GM10248 (cell line): ENCODE measurements at regions of chr12 and their contacts with region 1.

Region 1: GRCh38 chr12:51980051-51980808 is 26.5 kb upstream of the TAMALIN start:
- DNase-seq: peak; percentile 86
- CTCF ChIP-seq: peak; percentile 96

Region 2: GRCh38 chr12:51994959-51995358 is 14.7 kb after region 1 on chr12:
- CTCF ChIA-PET with region 1: interaction called, 18 read pairs
- POLR2A ChIA-PET with region 1: no interaction called
- DNase-seq: no peak
- CTCF ChIP-seq: no peak

Region 3: DNA sequence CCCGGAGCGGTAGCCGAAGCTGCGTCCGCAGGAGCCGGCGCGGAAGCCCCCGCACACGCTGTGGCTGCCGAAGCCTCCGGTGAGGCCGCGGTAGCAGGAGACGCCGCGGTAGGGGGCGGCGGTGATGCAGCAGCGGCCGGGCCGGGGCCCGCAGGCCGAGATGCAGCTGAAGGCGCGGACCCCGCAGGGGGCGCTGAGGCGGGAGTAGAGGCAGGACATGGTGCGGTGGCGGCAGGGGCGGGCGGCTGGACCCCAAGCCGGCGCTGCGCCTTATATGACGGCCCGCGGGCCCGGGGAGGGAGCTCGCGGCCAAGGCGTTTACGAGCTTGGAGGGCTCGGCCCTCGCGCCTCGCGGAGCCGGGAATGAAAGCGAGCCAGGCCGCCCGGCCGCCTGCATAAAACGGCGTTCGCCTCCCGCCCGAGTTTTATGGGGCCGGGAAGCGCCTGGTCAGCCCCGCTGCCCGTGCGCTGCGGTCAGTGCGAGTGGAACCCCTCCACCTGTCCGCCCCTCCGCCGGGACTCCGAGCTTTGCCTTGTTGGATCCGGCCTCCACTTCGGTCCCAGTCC is 278.2 kb after region 1 on chr12:
- CTCF ChIA-PET with region 1: no interaction called
- POLR2A ChIA-PET with region 1: no interaction called
- DNase-seq: no peak
- CTCF ChIP-seq: no peak